HEK293 (cell line): ENCODE measurements at regions of chr11 and their contacts with region 1.

Region 1: GRCh38 chr11:60831143-60831500 is 10.8 kb upstream of the CCDC86 start:
- H3K4me3 ChIP-seq: no peak overlapping the region
- H3K27ac ChIP-seq: no peak overlapping the region
- H3K4me1 ChIP-seq: no peaks in the 10 kb centered on the region
- CTCF ChIP-seq: peak; percentile 73; the same call in 1 of the 2 replicates

Region 2: DNA sequence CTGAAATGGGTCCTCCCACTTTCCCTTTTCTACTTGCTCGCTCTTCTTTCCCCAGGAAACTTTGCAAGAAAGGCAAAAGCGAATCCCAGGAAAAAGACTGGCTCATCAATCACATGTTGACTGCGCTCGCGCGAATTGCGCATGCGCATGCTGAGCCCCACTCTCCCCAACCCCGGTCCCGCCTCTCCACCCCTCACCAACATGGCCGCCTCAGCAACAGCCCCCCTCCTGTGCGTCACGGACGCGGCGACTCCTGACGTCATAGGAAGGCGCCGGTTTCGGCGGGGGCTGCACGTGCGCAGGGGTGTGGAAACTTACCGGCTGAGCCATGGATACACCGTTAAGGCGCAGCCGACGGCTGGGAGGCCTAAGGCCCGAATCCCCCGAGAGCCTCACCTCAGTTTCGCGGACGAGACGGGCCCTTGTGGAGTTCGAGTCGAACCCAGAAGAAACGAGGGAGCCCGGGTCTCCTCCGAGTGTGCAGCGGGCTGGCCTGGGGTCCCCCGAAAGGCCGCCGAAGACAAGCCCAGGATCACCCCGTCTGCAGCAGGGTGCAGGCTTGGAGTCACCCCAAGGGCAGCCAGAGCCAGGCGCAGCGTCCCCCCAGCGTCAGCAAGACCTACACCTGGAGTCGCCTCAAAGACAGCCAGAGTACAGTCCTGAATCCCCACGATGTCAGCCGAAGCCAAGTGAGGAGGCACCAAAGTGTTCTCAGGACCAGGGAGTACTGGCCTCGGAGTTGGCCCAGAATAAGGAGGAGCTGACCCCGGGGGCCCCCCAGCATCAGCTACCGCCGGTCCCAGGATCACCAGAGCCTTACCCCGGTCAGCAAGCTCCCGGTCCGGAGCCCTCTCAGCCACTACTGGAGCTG is 10.9 kb after region 1 on chr11 and contains the start of gene CCDC86:
- CTCF ChIA-PET with region 1: interaction called, 21 read pairs
- POLR2A ChIA-PET with region 1: no interaction called
- H3K4me3 ChIP-seq: peak within 1 kb of the TSS; percentile 88
- H3K27ac ChIP-seq: peak within 1 kb of the TSS; percentile 44
- H3K4me1 ChIP-seq: no peaks in the 10 kb centered on the region
- CTCF ChIP-seq: no peak

Region 3: GRCh38 chr11:60899046-60899936 is 68.2 kb after region 1 on chr11:
- CTCF ChIA-PET with region 1: interaction called, 78 read pairs
- POLR2A ChIA-PET with region 1: interaction called, 4 read pairs
- H3K4me3 ChIP-seq: no peak overlapping the region
- H3K27ac ChIP-seq: no peak overlapping the region
- H3K4me1 ChIP-seq: no peaks in the 10 kb centered on the region
- CTCF ChIP-seq: no peak

Region 4: GRCh38 chr11:61129639-61130523 is 298.8 kb after region 1 on chr11:
- CTCF ChIA-PET with region 1: interaction called, 21 read pairs
- POLR2A ChIA-PET with region 1: no interaction called
- H3K4me3 ChIP-seq: no peak overlapping the region
- H3K27ac ChIP-seq: no peak overlapping the region
- H3K4me1 ChIP-seq: no peaks in the 10 kb centered on the region
- CTCF ChIP-seq: peak; percentile 98

Region 5: GRCh38 chr11:61187505-61188130 is 356.5 kb after region 1 on chr11:
- CTCF ChIA-PET with region 1: interaction called, 31 read pairs
- POLR2A ChIA-PET with region 1: no interaction called
- H3K4me3 ChIP-seq: no peak overlapping the region
- H3K27ac ChIP-seq: no peak overlapping the region
- H3K4me1 ChIP-seq: no peaks in the 10 kb centered on the region
- CTCF ChIP-seq: peak; percentile 32; the same call in 1 of the 2 replicates